ENCODE measurements at regions of chr2 and their contacts with region 1.

Region 1: GRCh38 chr2:85288244-85288725 is 39.5 kb downstream of the TGOLN2 start:
- DNase-seq: peak; percentile 82 to 86
- ATAC-seq: peak; percentile 78 to 83
- H3K4me3 ChIP-seq: no peak overlapping the region
- H3K27ac ChIP-seq: peak overlapping the region; percentile 62 to 82
- H3K4me1 ChIP-seq: peaks cover 31% of the 10 kb centered on the region
- CTCF ChIP-seq: no peak
- EP300 ChIP-seq: no peak
- POLR2A ChIP-seq: no peak
- RAD21 ChIP-seq: no peak

Region 2: DNA sequence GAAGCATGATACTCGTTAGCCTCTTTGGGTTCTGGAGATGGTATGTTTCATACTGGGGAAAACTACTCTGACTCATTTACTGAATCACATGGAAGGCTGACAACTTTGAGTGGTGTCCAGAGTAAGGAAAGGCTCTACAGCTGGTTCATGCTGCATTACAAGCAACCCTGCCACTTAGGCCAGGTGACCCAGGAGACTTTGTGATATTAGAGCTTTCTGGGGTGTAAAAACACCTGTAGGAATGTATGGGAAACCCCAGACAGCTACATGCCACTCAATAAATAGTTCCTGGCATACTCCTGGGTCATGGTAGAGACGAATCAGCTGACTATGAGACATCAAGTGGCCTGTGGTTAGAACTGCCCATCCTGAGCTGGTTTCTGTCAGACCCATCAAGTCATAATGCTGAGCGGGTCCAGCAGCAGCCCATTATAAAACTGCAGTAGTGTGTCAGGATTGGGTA is 176.4 kb before region 1 on chr2:
- CTCF ChIA-PET with region 1: interaction called, 16 read pairs
- POLR2A ChIA-PET with region 1: no interaction called
- DNase-seq: no peak
- ATAC-seq: peak in 1 of 2 experiments; percentile 49; a peak in 2 of 6 replicates
- H3K4me3 ChIP-seq: no peak overlapping the region
- H3K27ac ChIP-seq: no peak overlapping the region
- H3K4me1 ChIP-seq: peaks cover under 1% of the 10 kb centered on the region; the same call in 1 of the 3 replicates
- CTCF ChIP-seq: no peak
- EP300 ChIP-seq: no peak
- POLR2A ChIP-seq: no peak
- RAD21 ChIP-seq: no peak

Region 3: DNA sequence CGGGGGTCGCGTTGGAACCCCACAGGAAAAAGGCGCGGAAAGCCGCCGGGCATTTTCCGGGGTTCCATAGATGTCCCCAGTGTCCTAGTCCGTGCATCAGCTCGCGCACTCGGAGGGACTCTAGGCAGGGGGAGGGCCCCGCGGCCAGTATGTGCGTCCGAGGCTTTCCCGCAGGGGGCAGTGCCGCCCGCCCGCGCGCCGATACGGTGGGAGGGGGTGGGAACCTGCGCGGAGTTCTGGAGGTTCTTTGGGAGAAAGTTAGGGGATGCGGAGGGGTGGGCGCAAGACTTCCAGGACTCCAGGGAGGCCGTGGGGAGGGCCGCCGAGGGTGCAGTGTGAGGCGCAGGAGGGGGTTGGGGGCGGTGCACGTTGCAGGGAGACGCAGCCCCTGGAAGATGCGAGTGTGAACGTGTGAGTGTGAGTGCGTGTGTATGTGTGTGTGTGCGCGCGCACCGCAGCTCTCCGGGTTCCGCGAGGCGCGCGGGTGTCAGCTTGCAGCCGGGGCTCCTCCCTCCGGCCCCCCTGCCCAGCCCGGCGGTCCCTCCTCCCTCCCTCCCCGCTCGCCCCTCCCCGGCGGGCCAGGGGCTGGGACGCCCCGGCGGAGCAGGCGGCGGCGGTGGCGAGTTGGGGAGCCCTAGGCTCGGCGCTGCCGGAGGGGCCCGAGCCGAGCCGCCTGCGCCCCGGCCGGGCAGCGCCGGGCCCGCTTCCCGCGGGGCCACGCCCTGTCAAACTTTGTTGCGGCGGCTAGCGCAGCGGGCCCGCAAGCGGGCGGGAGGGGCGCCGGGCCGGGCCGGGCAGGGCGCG is 155.2 kb before region 1 on chr2 and contains the start of gene TCF7L1:
- CTCF ChIA-PET with region 1: interaction called, 108 read pairs
- POLR2A ChIA-PET with region 1: interaction called, 5 read pairs
- DNase-seq: peak; percentile 89 to 93
- ATAC-seq: peak; percentile 87 to 96
- H3K4me3 ChIP-seq: peak within 1 kb of the TSS; percentile 61
- H3K27ac ChIP-seq: peak within 1 kb of the TSS; percentile 76 to 90
- H3K4me1 ChIP-seq: peaks cover 9% of the 10 kb centered on the region
- CTCF ChIP-seq: peak; percentile 78
- EP300 ChIP-seq: no peak
- POLR2A ChIP-seq: peak; percentile 70
- RAD21 ChIP-seq: peak; percentile 72 to 86
- polyA plus RNA-seq, gene TCF7L1: 0.68 and 0.95 TPM in 2 replicates

Region 4: DNA sequence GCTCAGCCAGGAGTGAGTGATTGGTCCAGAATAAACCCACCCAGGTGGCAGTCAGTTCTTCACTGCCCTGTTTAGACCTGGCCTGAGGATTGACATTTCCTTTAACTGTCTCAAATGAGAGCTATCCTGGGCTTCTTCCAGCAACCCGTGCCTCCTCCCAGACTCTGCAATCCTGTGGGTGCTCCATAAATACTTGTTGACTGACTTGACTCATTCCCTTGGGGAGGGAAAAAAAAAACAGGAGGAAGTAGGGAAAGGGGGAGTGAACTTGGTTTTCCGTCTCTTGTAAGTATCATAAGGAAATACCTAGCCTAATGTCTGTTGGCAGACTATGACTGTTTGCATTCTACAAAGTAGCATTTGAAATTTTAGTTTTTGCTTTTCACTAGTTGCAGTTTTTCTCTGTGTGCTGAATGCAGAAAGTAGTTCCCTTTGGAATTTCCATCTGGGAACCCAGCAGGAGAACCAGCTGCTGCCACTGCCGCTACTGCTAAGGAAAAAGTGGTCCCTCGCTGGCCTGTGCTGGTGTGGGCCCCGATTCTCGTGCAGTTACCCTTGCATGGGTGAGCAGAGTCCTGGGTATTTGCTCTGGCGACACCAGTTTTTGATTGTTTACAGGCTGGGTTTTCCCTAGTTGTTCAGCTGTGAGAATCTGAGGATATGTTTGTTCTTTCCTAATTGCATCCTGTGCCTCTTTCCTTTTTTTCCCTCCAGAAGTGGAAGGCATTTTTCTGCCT is 39.3 kb before region 1 on chr2:
- CTCF ChIA-PET with region 1: interaction called, 33 read pairs
- POLR2A ChIA-PET with region 1: interaction called, 3 read pairs
- DNase-seq: peak in 1 of 2 experiments; percentile 57
- ATAC-seq: peak; percentile 35 to 76; a peak in 5 of 6 replicates
- H3K4me3 ChIP-seq: no peak overlapping the region
- H3K27ac ChIP-seq: peak overlapping the region in 1 of 2 experiments; percentile 30; a peak in 3 of 6 replicates
- H3K4me1 ChIP-seq: peaks cover 22% of the 10 kb centered on the region
- CTCF ChIP-seq: no peak
- EP300 ChIP-seq: no peak
- POLR2A ChIP-seq: no peak
- RAD21 ChIP-seq: no peak

Region 5: DNA sequence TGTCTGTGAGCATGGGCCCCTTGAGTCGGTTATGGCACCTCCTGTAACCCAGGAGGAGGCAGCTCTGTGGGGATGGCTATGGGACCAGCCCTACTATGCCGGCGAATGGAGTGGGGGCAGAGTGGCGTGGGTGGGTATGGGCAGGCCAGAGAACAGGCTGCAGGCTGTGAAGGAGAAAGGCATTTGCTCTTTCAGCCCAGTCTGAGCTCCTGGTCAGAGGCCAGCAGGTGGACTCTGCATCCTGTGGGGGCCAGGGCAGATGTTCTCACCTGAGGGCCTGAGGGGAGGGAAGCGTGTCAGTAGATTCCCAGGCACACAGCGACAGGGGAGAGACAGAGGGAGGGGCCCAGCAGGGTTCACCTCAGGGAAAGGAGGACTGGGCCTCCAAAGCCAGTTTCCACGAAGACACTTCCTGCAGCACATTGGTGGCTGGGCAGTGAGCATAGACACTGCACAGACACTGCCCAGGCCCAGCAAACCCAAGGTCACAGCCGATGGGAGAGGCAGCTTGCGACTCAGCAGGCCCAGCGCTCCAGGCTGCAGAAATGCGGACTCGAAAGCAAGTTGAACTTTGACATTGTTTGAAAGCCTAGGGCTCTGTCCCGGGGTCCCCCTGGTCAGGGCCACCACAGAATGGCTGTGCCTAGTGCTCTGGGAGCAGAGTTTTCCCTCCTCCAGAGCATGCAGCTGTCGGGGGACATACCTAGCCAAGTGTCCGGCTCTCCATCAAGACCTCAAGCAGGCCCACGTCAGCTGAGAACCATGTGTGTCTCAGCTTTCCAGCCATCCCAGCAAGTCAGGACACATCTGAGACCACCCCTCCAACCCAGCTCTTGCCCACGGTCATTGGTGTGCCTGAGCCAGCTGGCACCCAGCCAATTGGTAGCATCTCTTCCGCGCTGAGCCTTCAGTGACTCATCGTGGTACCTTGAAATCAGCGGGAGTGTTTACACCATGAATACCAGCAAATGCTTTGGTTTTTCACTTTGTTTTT is 14.2 kb before region 1 on chr2:
- CTCF ChIA-PET with region 1: interaction called, 111 read pairs
- POLR2A ChIA-PET with region 1: no interaction called
- DNase-seq: peak in 1 of 2 experiments; percentile 62
- ATAC-seq: peak; percentile 67 to 69
- H3K4me3 ChIP-seq: no peak overlapping the region
- H3K27ac ChIP-seq: no peak overlapping the region
- H3K4me1 ChIP-seq: peaks cover 13% of the 10 kb centered on the region
- CTCF ChIP-seq: no peak
- EP300 ChIP-seq: no peak
- POLR2A ChIP-seq: no peak
- RAD21 ChIP-seq: no peak

Region 6: GRCh38 chr2:85369500-85369899 is 81.2 kb after region 1 on chr2:
- CTCF ChIA-PET with region 1: no interaction called
- POLR2A ChIA-PET with region 1: no interaction called
- DNase-seq: peak in 1 of 2 experiments; percentile 30
- ATAC-seq: peak; percentile 64 to 72; a peak in 5 of 6 replicates
- H3K4me3 ChIP-seq: no peak overlapping the region
- H3K27ac ChIP-seq: peak overlapping the region in 1 of 2 experiments; percentile 11; a peak in 1 of 6 replicates
- H3K4me1 ChIP-seq: peaks cover 9% of the 10 kb centered on the region; the same call in 2 of the 3 replicates
- CTCF ChIP-seq: no peak
- EP300 ChIP-seq: no peak
- POLR2A ChIP-seq: no peak
- RAD21 ChIP-seq: no peak

Measured in A549 (cell line).